Spleen (tissue), 13 donors: ENCODE measurements at regions of chr7 and their contacts with region 1.

Region 1: DNA sequence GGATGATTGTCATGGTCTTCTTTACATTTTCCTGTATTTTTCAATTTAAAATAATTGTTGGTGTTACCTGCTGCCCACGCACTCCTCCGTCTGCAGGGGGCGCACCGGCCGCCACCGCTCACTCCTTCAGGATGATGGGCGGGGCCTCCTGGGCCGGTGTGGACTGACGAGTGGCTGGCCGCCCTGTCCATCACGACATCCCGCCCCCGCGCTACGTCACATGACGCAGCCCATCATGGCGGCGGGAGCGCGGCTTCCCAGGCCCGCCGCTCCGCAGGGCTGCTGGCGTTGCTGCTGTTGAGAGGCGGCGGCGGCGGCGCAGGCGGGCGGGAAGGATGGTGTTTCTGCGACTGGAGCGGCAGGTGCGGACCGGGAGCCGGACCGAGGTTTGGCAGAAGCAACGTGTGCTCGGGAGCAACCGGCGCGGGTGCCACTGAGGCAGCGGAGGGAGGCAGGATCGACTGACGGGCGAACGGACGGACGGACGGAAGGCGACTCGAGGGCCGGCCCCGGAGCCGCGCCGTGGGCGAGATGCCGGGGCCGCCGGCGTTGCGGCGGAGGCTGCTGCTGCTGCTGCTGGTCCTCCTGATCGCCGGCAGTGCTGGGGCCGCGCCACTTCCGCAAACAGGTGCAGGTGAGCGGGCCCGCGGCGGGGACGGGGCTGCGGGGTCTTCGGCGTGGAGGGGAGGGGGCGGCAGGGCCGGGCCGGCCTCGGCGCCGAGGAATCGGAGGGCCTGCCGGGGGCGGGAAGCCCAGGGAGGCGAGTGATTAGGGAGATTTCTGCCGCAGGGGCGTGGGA is at the start of gene LMTK2:
- DNase-seq: peak; percentile 97
- H3K4me3 ChIP-seq: peak within 1 kb of the TSS; percentile 78 to 100 (median 99)
- H3K27ac ChIP-seq: peak within 1 kb of the TSS; percentile 75 to 97 (median 89)
- H3K4me1 ChIP-seq: peaks cover 14 to 54% (median 34%) of the 10 kb centered on the region in 6 donors
- H3K27me3 ChIP-seq: peaks cover 0 to 36% (median 4%) of the 10 kb centered on the region in 7 donors
- CTCF ChIP-seq: peak; percentile 89 to 99 (median 96)
- POLR2A ChIP-seq: peak; percentile 76 to 84 (median 82)
- total RNA-seq, gene LMTK2: 15.7 to 22.8 (median 19.9) TPM

Region 2: GRCh38 chr7:98075801-98076200 is 31.0 kb before region 1 on chr7:
- intact Hi-C with region 1: no loop called
- DNase-seq: no peak
- H3K4me3 ChIP-seq: no peak overlapping the region
- H3K27ac ChIP-seq: no peak overlapping the region
- H3K4me1 ChIP-seq: no peaks in the 10 kb centered on the region
- H3K27me3 ChIP-seq: peaks cover 0 to 24% (median 0%) of the 10 kb centered on the region in 7 donors
- CTCF ChIP-seq: no peak
- POLR2A ChIP-seq: no peak

Region 3: GRCh38 chr7:98168181-98168905 is 61.5 kb after region 1 on chr7:
- intact Hi-C with region 1: loop called (anchors 2 kb)
- DNase-seq: peak; percentile 78
- H3K4me3 ChIP-seq: no peak overlapping the region
- H3K27ac ChIP-seq: no peak overlapping the region
- H3K4me1 ChIP-seq: peaks cover 0 to 57% (median 33%) of the 10 kb centered on the region in 6 donors
- H3K27me3 ChIP-seq: no peaks in the 10 kb centered on the region
- CTCF ChIP-seq: peak; percentile 45 to 85 (median 71)
- POLR2A ChIP-seq: no peak

Region 4: GRCh38 chr7:98760201-98760651 is 653.4 kb after region 1 on chr7:
- intact Hi-C with region 1: no loop called
- DNase-seq: no peak
- H3K4me3 ChIP-seq: no peak overlapping the region
- H3K27ac ChIP-seq: no peak overlapping the region
- H3K4me1 ChIP-seq: no peaks in the 10 kb centered on the region
- H3K27me3 ChIP-seq: peaks cover 0 to 49% (median 0%) of the 10 kb centered on the region in 7 donors
- CTCF ChIP-seq: no peak
- POLR2A ChIP-seq: no peak